ENCODE measurements at regions of chrX and their contacts with region 1.

Region 1: DNA sequence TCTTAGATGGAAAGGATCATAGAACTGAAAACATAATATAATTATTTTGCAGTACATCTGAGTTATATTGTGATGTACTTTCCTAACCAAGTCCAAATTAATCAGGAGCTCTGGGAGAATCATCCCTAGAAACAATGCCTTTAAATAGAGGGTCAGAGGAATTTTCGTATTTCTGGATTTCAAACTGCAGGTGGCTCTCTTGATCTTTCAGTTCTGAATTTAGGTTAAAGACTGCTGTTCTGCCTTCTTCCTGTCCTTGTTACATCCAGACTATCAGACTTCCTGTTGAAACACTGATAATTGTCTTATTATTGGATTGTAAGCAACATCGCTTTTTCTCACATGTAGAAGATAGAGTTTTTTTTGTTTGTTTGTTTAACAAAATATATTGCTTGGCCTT is 142.7 kb downstream of the RPA4 start:
- DNase-seq: no peak
- H3K4me3 Mint-ChIP-seq: no peak overlapping the region
- H3K27ac Mint-ChIP-seq: no peak overlapping the region
- H3K4me1 Mint-ChIP-seq: peaks cover 2% of the 10 kb centered on the region
- H3K27me3 Mint-ChIP-seq: no peaks in the 10 kb centered on the region

Region 2: GRCh38 chrX:96957718-96958117 is 68.7 kb before region 1 on chrX:
- CTCF ChIA-PET with region 1: no interaction called
- POLR2A ChIA-PET with region 1: no interaction called
- intact Hi-C with region 1: no loop called
- DNase-seq: no peak
- H3K4me3 Mint-ChIP-seq: no peak overlapping the region
- H3K27ac Mint-ChIP-seq: no peak overlapping the region
- H3K4me1 Mint-ChIP-seq: no peaks in the 10 kb centered on the region
- H3K27me3 Mint-ChIP-seq: no peaks in the 10 kb centered on the region

Region 3: GRCh38 chrX:97039363-97040029 is 13.1 kb after region 1 on chrX:
- CTCF ChIA-PET with region 1: interaction called, 5 read pairs
- POLR2A ChIA-PET with region 1: interaction called, 4 read pairs
- intact Hi-C with region 1: loop called (anchors 1 kb)
- DNase-seq: peak; percentile 15
- H3K4me3 Mint-ChIP-seq: no peak overlapping the region
- H3K27ac Mint-ChIP-seq: peak overlapping the region; percentile 51
- H3K4me1 Mint-ChIP-seq: peaks cover 11% of the 10 kb centered on the region
- H3K27me3 Mint-ChIP-seq: no peaks in the 10 kb centered on the region

Region 4: DNA sequence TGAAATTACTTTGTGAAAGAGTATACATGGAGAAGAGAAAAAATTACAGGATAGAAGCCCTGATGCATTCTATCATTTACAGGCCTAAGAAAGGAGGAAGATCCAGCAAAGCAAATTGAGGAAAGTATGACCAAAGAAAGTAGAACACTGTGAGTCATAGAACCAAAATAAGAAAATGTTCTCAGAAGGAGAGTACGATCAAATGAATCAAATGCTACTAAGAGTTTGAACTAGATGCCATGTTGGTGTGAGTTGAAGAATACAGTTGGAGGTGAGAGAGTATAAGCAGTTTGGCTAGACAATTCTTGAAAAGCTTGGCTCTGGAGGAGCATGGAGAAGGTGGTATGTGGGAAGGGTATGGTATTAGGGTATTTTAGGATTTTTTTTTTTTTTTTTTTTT is 19.1 kb after region 1 on chrX:
- CTCF ChIA-PET with region 1: interaction called, 5 read pairs
- POLR2A ChIA-PET with region 1: interaction called, 4 read pairs
- intact Hi-C with region 1: loop called (anchors 2 kb)
- DNase-seq: no peak
- H3K4me3 Mint-ChIP-seq: no peak overlapping the region
- H3K27ac Mint-ChIP-seq: no peak overlapping the region
- H3K4me1 Mint-ChIP-seq: peaks cover 5% of the 10 kb centered on the region
- H3K27me3 Mint-ChIP-seq: no peaks in the 10 kb centered on the region

Region 5: GRCh38 chrX:97685753-97686152 is 659.3 kb after region 1 on chrX:
- CTCF ChIA-PET with region 1: no interaction called
- POLR2A ChIA-PET with region 1: no interaction called
- intact Hi-C with region 1: loop called (anchors 5 kb)
- DNase-seq: peak; percentile 14
- H3K4me3 Mint-ChIP-seq: no peak overlapping the region
- H3K27ac Mint-ChIP-seq: no peak overlapping the region
- H3K4me1 Mint-ChIP-seq: no peaks in the 10 kb centered on the region
- H3K27me3 Mint-ChIP-seq: peaks cover 2% of the 10 kb centered on the region